Activated CD4-positive, alpha-beta memory T cell treated with anti-CD3 and anti-CD28 coated beads for 36 hours (primary cell): ENCODE measurements at regions of chr2 and their contacts with region 1.

Region 1: DNA sequence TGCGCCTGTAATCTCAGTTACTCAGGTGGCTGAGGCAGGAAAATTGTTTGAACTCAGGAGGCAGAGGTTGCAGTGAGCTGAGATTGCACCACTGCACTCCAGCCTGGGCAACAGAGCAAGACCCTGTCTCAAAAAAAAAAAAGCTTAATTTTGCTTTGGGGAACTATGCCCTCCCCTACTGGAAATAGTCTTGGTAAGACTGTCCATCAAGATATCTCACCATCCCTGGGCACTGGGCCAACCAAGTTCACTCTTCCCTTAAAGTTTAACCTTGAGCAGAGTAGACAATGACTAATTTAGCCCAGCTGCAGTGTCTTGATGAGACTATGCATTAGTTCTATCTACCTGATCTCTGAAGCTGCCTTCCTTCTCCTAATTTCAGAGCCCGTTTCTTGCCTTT is 44.7 kb downstream of the ASXL2 start:
- DNase-seq: peak; percentile 39
- H3K4me3 Mint-ChIP-seq: no peak overlapping the region
- H3K27ac Mint-ChIP-seq: no peak overlapping the region
- H3K4me1 Mint-ChIP-seq: peaks cover 54% of the 10 kb centered on the region
- H3K27me3 Mint-ChIP-seq: no peaks in the 10 kb centered on the region

Region 2: GRCh38 chr2:25794544-25795276 is 38.9 kb before region 1 on chr2:
- CTCF ChIA-PET with region 1: interaction called, 8 read pairs
- POLR2A ChIA-PET with region 1: interaction called, 8 read pairs
- intact Hi-C with region 1: loop called (anchors 1 kb)
- DNase-seq: no peak
- H3K4me3 Mint-ChIP-seq: peak overlapping the region; percentile 66
- H3K27ac Mint-ChIP-seq: peak overlapping the region; percentile 81
- H3K4me1 Mint-ChIP-seq: peaks cover 77% of the 10 kb centered on the region
- H3K27me3 Mint-ChIP-seq: no peaks in the 10 kb centered on the region

Region 3: GRCh38 chr2:25822190-25823117 is 11.1 kb before region 1 on chr2:
- CTCF ChIA-PET with region 1: interaction called, 10 read pairs
- POLR2A ChIA-PET with region 1: interaction called, 9 read pairs
- intact Hi-C with region 1: loop called (anchors 1 kb)
- DNase-seq: peak; percentile 77
- H3K4me3 Mint-ChIP-seq: peak overlapping the region; percentile 68
- H3K27ac Mint-ChIP-seq: peak overlapping the region; percentile 51
- H3K4me1 Mint-ChIP-seq: peaks cover 61% of the 10 kb centered on the region
- H3K27me3 Mint-ChIP-seq: peaks cover 1% of the 10 kb centered on the region

Region 4: DNA sequence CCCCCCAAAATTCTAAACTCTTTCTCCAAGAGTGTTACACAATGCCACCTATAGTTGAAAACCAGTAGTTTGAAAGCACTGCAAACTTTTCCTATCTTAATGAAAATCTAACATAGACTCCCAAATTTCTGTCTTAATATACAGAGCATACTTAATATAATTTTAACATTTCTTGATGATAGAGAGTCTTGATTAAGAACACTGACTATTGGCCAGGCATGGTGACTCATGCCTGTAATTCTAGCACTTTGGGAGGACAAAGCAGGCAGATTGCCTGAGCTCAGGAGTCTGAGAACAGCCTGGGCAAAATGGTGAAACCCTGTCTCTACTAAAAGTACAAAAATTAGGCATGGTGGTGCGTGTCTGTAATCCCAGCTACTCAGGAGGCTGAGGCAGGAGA is 10.5 kb after region 1 on chr2:
- CTCF ChIA-PET with region 1: no interaction called
- POLR2A ChIA-PET with region 1: no interaction called
- intact Hi-C with region 1: no loop called
- DNase-seq: no peak
- H3K4me3 Mint-ChIP-seq: no peak overlapping the region
- H3K27ac Mint-ChIP-seq: no peak overlapping the region
- H3K4me1 Mint-ChIP-seq: peaks cover 11% of the 10 kb centered on the region
- H3K27me3 Mint-ChIP-seq: no peaks in the 10 kb centered on the region

Region 5: GRCh38 chr2:26068602-26069298 is 235.2 kb after region 1 on chr2:
- CTCF ChIA-PET with region 1: no interaction called
- POLR2A ChIA-PET with region 1: no interaction called
- intact Hi-C with region 1: loop called (anchors 5 kb)
- DNase-seq: peak; percentile 76
- H3K4me3 Mint-ChIP-seq: peak overlapping the region; percentile 69
- H3K27ac Mint-ChIP-seq: peak overlapping the region; percentile 96
- H3K4me1 Mint-ChIP-seq: peaks cover 57% of the 10 kb centered on the region
- H3K27me3 Mint-ChIP-seq: no peaks in the 10 kb centered on the region